MCF 10A (cell line): ENCODE measurements at regions of chr10 and their contacts with region 1.

Region 1: DNA sequence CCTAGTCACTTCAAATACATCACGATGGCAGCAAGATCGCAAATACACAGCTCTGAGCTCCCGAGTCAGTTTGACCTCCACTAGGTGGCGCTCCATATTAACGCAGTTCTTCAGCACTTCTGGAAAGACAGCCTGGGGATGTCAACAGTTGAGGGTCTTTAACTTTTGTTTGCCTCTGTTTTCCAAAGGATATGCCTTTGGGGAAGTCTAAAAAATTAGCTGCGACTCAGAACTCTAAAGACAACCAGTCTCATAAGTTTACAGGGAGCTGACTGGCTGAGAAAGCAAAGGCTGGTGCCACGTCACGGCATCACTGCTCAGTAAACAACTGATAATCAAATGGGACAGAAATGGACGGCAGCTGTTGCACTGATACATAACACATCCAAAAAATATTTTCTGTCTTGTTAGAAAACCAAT is 458.8 kb downstream of the SORCS1 start:
- DNase-seq: peak; percentile 75
- H3K4me3 Mint-ChIP-seq: no peak overlapping the region
- H3K27ac Mint-ChIP-seq: peak overlapping the region; percentile 52
- H3K4me1 Mint-ChIP-seq: peaks cover 6% of the 10 kb centered on the region
- H3K27me3 Mint-ChIP-seq: no peaks in the 10 kb centered on the region
- CTCF ChIP-seq: peak; percentile 79

Region 2: DNA sequence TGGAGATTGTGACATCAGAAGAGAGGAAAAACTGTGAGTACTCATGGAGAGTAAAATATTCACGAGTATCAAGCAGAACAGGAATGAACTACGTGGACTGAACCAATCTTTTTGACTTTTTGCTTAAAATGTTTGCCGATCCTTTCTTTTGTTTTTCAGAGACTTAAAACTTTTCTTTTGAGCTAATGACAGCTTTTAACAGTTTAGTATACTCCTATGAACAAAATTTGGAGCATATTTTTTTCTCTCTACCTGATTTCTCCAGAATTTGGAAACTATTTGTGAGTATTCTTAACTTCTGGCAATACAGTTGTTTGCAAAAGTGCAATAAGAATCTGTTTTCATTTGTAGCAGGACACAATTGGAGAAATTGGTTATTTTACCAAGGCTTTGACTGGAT is 327.4 kb before region 1 on chr10:
- CTCF ChIA-PET with region 1: no interaction called
- POLR2A ChIA-PET with region 1: no interaction called
- intact Hi-C with region 1: no loop called
- DNase-seq: no peak
- H3K4me3 Mint-ChIP-seq: no peak overlapping the region
- H3K27ac Mint-ChIP-seq: no peak overlapping the region
- H3K4me1 Mint-ChIP-seq: peaks cover 7% of the 10 kb centered on the region
- H3K27me3 Mint-ChIP-seq: no peaks in the 10 kb centered on the region
- CTCF ChIP-seq: no peak

Region 3: DNA sequence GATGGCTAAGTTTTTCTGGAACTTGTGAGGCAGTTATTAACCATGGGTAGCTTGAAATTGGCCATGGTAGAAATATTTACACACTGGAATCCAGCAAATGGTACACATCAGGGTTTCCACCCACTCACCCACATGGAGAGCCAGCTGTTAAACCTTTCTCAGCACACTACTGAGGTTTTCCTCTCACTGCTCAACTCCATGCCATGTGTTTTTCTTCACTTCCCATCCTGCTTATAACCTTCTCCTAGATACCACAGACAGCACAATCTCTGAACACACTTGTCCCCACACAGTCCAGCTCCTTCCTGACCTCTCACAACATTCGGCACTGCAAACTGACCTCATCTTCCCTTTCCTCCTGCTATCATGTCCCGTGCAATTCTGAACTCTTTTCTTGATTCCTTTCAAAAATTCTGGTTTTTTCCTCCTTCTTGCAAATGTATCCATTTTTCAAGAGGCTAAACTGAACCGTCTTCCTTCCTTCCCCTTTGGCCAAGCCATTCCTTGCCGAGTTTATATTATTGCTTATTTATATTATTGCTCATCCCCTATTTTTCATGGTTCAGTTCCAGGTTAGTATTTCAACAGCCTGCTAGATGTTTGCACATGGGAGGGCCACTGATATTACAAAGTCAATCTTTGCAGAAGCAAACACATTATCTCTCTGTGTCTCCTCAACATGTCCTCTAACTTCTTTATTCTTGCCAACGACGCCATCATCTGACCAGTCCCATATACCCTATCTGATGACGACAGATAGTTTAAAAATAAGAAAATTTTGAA is 147.5 kb before region 1 on chr10:
- CTCF ChIA-PET with region 1: no interaction called
- POLR2A ChIA-PET with region 1: no interaction called
- intact Hi-C with region 1: no loop called
- DNase-seq: peak; percentile 74
- H3K4me3 Mint-ChIP-seq: no peak overlapping the region
- H3K27ac Mint-ChIP-seq: peak overlapping the region; percentile 15
- H3K4me1 Mint-ChIP-seq: peaks cover 39% of the 10 kb centered on the region
- H3K27me3 Mint-ChIP-seq: no peaks in the 10 kb centered on the region
- CTCF ChIP-seq: no peak

Region 4: DNA sequence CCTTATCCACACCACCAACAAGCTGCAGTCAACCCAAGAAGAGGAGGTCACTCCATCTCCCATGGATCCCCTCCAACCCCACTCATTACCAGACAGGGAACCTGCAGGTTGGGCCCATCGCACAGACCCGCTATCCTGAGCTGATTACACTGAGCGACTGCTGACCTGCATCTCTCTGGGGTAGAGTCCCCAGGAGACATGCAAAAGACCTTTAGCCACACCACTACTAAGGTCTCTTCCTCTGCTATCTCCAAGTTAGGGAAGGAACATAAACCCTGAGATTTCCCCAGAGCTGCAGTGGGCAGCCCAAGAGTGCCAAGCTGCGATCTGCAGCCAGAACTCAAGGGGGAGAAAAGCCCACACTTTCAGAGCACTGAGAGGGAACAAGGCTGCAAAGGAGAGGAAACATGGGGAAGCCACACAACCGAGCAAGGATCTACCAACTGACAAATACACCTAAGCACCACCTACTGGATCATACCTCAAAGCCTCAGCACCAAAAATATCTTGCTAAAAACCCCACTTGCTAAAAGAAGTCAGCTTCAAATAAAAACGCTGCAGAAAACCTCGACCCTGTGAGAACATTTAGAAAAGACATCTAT is 160.7 kb after region 1 on chr10:
- CTCF ChIA-PET with region 1: no interaction called
- POLR2A ChIA-PET with region 1: no interaction called
- intact Hi-C with region 1: no loop called
- DNase-seq: no peak
- H3K4me3 Mint-ChIP-seq: no peak overlapping the region
- H3K27ac Mint-ChIP-seq: no peak overlapping the region
- H3K4me1 Mint-ChIP-seq: no peaks in the 10 kb centered on the region
- H3K27me3 Mint-ChIP-seq: no peaks in the 10 kb centered on the region
- CTCF ChIP-seq: no peak

Region 5: GRCh38 chr10:106919871-106920282 is 214.2 kb after region 1 on chr10:
- CTCF ChIA-PET with region 1: no interaction called
- POLR2A ChIA-PET with region 1: no interaction called
- intact Hi-C with region 1: no loop called
- DNase-seq: no peak
- H3K4me3 Mint-ChIP-seq: no peak overlapping the region
- H3K27ac Mint-ChIP-seq: no peak overlapping the region
- H3K4me1 Mint-ChIP-seq: no peaks in the 10 kb centered on the region
- H3K27me3 Mint-ChIP-seq: no peaks in the 10 kb centered on the region
- CTCF ChIP-seq: no peak

Region 6: GRCh38 chr10:106980495-106981451 is 275.1 kb after region 1 on chr10:
- CTCF ChIA-PET with region 1: interaction called, 10 read pairs
- POLR2A ChIA-PET with region 1: no interaction called
- intact Hi-C with region 1: no loop called
- DNase-seq: no peak
- H3K4me3 Mint-ChIP-seq: no peak overlapping the region
- H3K27ac Mint-ChIP-seq: no peak overlapping the region
- H3K4me1 Mint-ChIP-seq: peaks cover 10% of the 10 kb centered on the region
- H3K27me3 Mint-ChIP-seq: no peaks in the 10 kb centered on the region
- CTCF ChIP-seq: no peak

Region 7: GRCh38 chr10:107011105-107011504 is 305.4 kb after region 1 on chr10:
- CTCF ChIA-PET with region 1: no interaction called
- POLR2A ChIA-PET with region 1: no interaction called
- intact Hi-C with region 1: loop called (anchors 1 kb)
- DNase-seq: peak; percentile 35
- H3K4me3 Mint-ChIP-seq: no peak overlapping the region
- H3K27ac Mint-ChIP-seq: no peak overlapping the region
- H3K4me1 Mint-ChIP-seq: no peaks in the 10 kb centered on the region
- H3K27me3 Mint-ChIP-seq: no peaks in the 10 kb centered on the region
- CTCF ChIP-seq: no peak

Region 8: GRCh38 chr10:107144490-107144889 is 438.8 kb after region 1 on chr10:
- CTCF ChIA-PET with region 1: interaction called, 3 read pairs
- POLR2A ChIA-PET with region 1: no interaction called
- intact Hi-C with region 1: loop called (anchors 10 kb)
- DNase-seq: peak; percentile 23
- H3K4me3 Mint-ChIP-seq: no peak overlapping the region
- H3K27ac Mint-ChIP-seq: no peak overlapping the region
- H3K4me1 Mint-ChIP-seq: no peaks in the 10 kb centered on the region
- H3K27me3 Mint-ChIP-seq: no peaks in the 10 kb centered on the region
- CTCF ChIP-seq: no peak

Region 9: GRCh38 chr10:108204479-108205305 is 1499.0 kb after region 1 on chr10:
- CTCF ChIA-PET with region 1: interaction called, 9 read pairs
- POLR2A ChIA-PET with region 1: no interaction called
- intact Hi-C with region 1: loop called (anchors 5 kb)
- DNase-seq: peak; percentile 59
- H3K4me3 Mint-ChIP-seq: no peak overlapping the region
- H3K27ac Mint-ChIP-seq: no peak overlapping the region
- H3K4me1 Mint-ChIP-seq: no peaks in the 10 kb centered on the region
- H3K27me3 Mint-ChIP-seq: no peaks in the 10 kb centered on the region
- CTCF ChIP-seq: peak; percentile 75